HepG2 (cell line): ENCODE measurements at regions of chr2 and their contacts with region 1.

Region 1: GRCh38 chr2:171416009-171416926 is 17.5 kb downstream of the METTL8 start:
- DNase-seq: peak; percentile 87
- ATAC-seq: peak; percentile 100
- H3K4me3 ChIP-seq: no peak overlapping the region
- H3K27ac ChIP-seq: no peak overlapping the region
- H3K4me1 ChIP-seq: peaks cover 9% of the 10 kb centered on the region
- H3K27me3 ChIP-seq: no peaks in the 10 kb centered on the region
- CTCF ChIP-seq: peak; percentile 97
- EP300 ChIP-seq: no peak
- POLR2A ChIP-seq: no peak
- RAD21 ChIP-seq: peak; percentile 95

Region 2: DNA sequence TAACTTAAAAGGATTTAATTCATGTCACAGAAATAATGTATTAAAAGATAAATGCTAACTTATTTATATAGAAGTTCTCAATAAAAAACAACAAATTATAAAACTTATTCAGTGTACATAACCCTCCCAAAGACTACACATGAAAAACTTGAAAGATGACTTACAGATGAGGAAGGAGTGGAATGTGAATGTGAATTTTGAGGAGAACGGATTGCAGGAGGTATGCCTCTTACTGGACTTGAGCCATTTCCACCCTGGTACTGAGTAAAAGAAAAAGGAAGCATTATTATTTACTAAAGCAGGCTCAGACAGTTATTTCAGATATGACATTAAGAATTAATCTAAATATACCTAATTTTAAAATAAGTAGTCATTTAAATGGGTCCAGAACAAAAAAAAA is 360.0 kb before region 1 on chr2:
- CTCF ChIA-PET with region 1: no interaction called
- POLR2A ChIA-PET with region 1: no interaction called
- in situ Hi-C with region 1: no loop called
- intact Hi-C with region 1: loop called (anchors 10 kb)
- DNase-seq: no peak
- ATAC-seq: no peak
- H3K4me3 ChIP-seq: no peak overlapping the region
- H3K27ac ChIP-seq: no peak overlapping the region
- H3K4me1 ChIP-seq: peaks cover 13% of the 10 kb centered on the region
- H3K27me3 ChIP-seq: no peaks in the 10 kb centered on the region
- CTCF ChIP-seq: no peak
- EP300 ChIP-seq: no peak
- POLR2A ChIP-seq: no peak
- RAD21 ChIP-seq: no peak

Region 3: GRCh38 chr2:171086352-171087290 is 329.6 kb before region 1 on chr2:
- CTCF ChIA-PET with region 1: interaction called, 3 read pairs
- POLR2A ChIA-PET with region 1: no interaction called
- in situ Hi-C with region 1: no loop called
- intact Hi-C with region 1: loop called (anchors 10 kb)
- DNase-seq: peak; percentile 65
- ATAC-seq: peak; percentile 79
- H3K4me3 ChIP-seq: peak overlapping the region in 1 of 3 experiments; percentile 3; a peak in 1 of 6 replicates
- H3K27ac ChIP-seq: peak overlapping the region; percentile 0
- H3K4me1 ChIP-seq: peaks cover 61% of the 10 kb centered on the region
- H3K27me3 ChIP-seq: no peaks in the 10 kb centered on the region
- CTCF ChIP-seq: peak; percentile 78
- EP300 ChIP-seq: no peak
- POLR2A ChIP-seq: no peak
- RAD21 ChIP-seq: peak; percentile 43; the same call in 1 of the 2 replicates

Region 4: DNA sequence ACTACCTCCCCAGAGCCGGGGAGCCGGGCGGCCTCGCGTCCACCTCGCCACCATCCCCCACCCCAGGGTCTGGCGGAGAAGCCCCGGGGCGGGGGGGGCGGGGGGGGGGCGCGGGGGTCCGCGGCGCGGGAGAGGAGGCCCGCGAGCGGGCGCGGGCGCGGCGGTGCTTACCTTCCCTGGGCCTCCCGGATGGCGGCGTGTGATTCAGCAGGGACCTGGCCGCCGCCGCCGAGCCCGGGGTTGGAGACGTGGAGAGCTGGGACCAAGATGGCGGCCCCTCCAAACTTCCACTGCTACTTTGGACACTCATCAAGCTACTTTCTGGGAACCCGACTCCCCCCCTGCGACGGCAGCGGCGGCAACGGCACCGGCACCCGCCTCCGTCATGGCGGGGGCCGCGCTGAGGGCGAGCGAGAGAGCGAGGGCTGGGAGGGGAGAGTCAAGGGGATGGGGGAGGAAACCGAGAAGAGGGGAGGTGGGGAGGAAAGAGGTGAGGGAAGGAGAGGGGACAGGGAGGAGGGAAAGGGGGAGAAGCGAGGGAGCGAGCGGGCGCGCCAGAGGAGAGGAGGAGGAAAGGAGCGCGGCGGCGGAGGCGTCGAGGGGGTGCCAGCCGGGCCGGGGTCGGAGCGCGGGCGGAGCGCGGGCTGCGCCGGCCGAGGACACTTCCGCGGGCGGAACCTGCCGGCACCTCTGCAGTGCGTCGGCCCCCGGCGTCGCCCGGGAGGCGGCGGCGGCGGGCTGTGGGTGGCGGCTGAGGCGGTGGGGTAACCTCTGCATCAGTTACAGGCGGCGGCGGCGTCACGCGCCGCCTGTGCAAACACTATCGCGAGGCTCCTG is 255.9 kb before region 1 on chr2 and contains the start of gene TLK1:
- CTCF ChIA-PET with region 1: no interaction called
- POLR2A ChIA-PET with region 1: interaction called, 14 read pairs
- in situ Hi-C with region 1: loop called (anchors 5 kb)
- intact Hi-C with region 1: loop called (anchors 2 kb)
- DNase-seq: peak; percentile 62
- ATAC-seq: peak; percentile 81
- H3K4me3 ChIP-seq: peak within 1 kb of the TSS; percentile 73 to 99 (median 90)
- H3K27ac ChIP-seq: peak within 1 kb of the TSS; percentile 96
- H3K4me1 ChIP-seq: peaks cover 52% of the 10 kb centered on the region
- H3K27me3 ChIP-seq: no peaks in the 10 kb centered on the region; a peak in 1 of 5 replicates
- CTCF ChIP-seq: peak; percentile 15; the same call in 1 of the 2 replicates
- EP300 ChIP-seq: no peak
- POLR2A ChIP-seq: peak; percentile 49 to 72; a peak in 3 of 4 replicates
- RAD21 ChIP-seq: peak; percentile 80
- total RNA-seq, gene TLK1: 28.7 and 52.7 TPM in 2 replicates

Region 5: DNA sequence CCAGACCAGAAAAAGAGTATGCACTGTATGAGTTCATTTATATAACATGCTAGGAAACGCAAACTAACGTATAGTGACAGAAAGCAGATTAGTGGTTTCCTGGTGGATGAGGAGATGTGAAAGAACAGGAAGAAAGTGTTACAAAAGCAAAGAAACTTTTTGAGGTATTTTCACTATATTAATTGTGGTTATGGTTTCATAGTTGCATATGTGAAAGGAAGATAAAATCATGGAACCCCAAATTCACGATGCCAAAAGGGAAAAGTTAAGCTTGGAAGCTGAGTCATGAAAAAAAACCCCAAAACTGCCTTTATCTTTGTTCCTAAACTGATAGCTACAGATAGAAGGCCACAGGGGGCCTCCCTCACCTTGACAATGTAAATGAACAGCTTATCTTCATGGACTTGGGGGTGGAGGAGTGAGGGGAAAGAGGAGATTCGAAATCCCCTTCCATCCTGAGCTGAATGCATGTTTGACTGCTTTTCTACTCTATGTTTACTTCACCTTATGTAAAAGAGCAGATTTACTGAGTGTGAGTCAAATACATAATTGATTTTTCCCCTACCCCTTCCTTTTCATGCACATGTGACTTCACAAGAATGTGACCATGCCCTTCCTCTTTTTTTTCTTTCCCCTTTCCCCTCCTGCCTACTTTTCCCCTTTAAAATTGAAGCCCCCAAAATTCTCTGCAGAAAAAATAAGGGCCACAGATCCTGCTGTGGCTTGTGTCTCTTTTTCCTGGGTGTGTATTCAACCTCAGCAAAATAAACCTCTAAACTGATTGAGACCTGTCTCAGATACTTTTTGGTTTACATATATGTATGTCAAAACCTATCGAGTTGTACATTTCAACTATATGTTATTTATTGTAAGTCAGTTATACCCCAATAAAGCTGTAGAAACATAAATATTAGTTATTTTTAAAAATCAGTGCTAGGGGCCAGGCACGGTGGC is 155.5 kb before region 1 on chr2:
- CTCF ChIA-PET with region 1: no interaction called
- POLR2A ChIA-PET with region 1: no interaction called
- in situ Hi-C with region 1: no loop called
- intact Hi-C with region 1: loop called (anchors 10 kb)
- DNase-seq: peak; percentile 32
- ATAC-seq: peak; percentile 81
- H3K4me3 ChIP-seq: no peak overlapping the region
- H3K27ac ChIP-seq: no peak overlapping the region
- H3K4me1 ChIP-seq: peaks cover 34% of the 10 kb centered on the region
- H3K27me3 ChIP-seq: no peaks in the 10 kb centered on the region
- CTCF ChIP-seq: peak; percentile 55
- EP300 ChIP-seq: no peak
- POLR2A ChIP-seq: no peak
- RAD21 ChIP-seq: 0 out of 2 replicates have a peak, but pooled peaks have one; percentile 18

Region 6: DNA sequence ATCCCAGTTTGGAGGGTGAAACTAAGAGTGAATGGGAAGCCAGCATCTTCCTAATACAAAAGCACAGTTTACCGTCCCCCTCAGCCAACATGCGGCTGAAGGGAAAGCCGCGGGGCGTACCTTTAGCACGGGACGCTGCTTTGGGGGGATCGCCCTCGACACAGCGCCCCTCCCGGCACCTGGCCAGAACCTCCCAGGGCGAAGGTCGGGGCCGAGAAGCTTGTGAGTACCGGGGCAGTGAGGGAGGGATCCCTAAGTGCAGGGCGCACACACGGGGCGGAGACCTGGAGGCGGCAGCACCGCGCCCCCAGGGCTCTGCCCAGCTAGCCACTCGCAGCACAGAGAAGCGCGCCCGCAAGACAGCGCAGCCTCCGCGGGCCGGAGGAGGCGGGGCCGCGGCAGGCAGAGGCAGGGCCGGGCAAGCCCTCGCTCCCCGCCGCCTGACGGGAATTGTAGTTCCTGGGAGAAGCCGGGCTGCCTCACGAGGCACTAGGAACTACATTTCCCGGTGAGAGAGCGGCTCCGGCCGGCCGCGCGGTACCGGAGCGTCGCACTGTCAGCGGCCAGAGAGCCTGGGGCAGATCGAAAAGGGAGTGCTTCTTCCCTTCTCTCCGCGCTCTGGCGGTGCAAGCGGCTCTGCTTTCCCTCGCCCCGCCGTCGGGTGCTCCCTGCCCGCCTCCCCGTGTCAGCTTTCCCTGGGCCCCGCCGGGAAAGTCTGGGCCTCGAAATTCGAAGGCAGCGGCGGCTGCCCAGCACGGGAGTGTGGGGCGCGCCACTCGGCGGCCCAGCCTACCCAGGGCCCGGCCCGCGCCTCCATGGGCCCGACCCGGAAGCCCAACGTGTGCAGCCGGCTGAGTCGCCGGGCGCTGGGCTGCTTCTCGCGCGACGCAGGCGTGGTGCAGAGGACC is 17.7 kb after region 1 on chr2 and contains the starts of genes DCAF17 and METTL8:
- CTCF ChIA-PET with region 1: no interaction called
- POLR2A ChIA-PET with region 1: interaction called, 21 read pairs
- in situ Hi-C with region 1: no loop called
- intact Hi-C with region 1: no loop called
- DNase-seq: peak; percentile 97
- ATAC-seq: peak; percentile 97
- H3K4me3 ChIP-seq: peak within 1 kb of the TSS; percentile 78 to 90 (median 88)
- H3K27ac ChIP-seq: peak within 1 kb of the TSS; percentile 87
- H3K4me1 ChIP-seq: peaks cover 75% of the 10 kb centered on the region
- H3K27me3 ChIP-seq: no peaks in the 10 kb centered on the region; a peak in 1 of 5 replicates
- CTCF ChIP-seq: peak; percentile 96
- EP300 ChIP-seq: peak; percentile 17 to 63; a peak in 2 of 4 replicates
- POLR2A ChIP-seq: peak; percentile 81 to 82
- RAD21 ChIP-seq: peak; percentile 62
- total RNA-seq, gene DCAF17: 30.0 and 35.3 TPM in 2 replicates
- total RNA-seq, gene METTL8: 68.2 and 89.8 TPM in 2 replicates

Region 7: DNA sequence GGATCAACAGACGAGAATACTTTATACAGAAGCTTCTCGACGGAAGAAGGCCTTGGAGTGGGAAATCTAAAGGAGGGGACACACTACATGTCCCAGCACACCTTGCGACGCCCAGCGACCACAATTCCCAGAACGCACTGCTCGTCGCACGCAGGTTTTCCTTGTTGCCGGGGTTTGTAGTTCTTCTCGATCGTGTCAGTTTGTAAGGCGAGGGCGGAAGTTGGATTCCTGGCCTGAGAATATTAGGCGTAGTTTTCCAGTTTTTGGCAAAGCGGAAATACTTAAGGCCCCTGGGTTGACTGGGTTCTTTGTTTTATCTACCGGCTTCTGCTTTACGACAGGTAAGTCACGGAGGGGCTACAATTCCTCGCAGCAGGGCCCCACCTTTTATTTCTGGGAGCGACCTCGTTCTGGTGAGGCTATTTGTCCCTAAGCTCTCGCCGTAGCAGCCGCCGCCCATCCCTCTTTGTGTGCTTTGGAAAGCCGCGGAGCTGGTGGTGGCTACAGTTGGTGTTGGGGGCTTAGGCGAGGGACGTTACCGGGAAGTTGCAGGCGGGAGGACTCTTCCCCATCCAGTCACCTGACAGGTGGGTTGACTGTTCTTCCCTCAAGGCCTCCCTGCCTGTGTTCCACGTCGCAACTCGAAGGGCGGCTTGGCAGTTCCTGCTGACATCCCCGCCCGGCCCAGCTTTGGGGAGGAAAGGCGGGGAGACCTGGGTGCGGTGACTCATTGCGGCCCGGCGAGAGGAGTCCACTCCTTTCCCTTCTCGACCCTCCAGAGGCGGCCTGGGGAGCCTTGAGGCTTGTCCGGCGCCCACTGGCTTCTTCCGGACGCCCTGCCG is 271.2 kb after region 1 on chr2 and contains the start of gene DYNC1I2:
- CTCF ChIA-PET with region 1: no interaction called
- POLR2A ChIA-PET with region 1: no interaction called
- in situ Hi-C with region 1: no loop called
- intact Hi-C with region 1: no loop called
- DNase-seq: peak; percentile 95
- ATAC-seq: peak; percentile 99
- H3K4me3 ChIP-seq: peak within 1 kb of the TSS; percentile 86 to 99 (median 95)
- H3K27ac ChIP-seq: peak within 1 kb of the TSS; percentile 70
- H3K4me1 ChIP-seq: peaks cover 12% of the 10 kb centered on the region
- H3K27me3 ChIP-seq: peaks cover 0 to 10% of the 10 kb centered on the region in 2 experiments; a peak in 1 of 5 replicates
- CTCF ChIP-seq: peak; percentile 18; the same call in 1 of the 2 replicates
- EP300 ChIP-seq: peak in 1 of 2 experiments; percentile 13; a peak in 1 of 4 replicates
- POLR2A ChIP-seq: peak; percentile 72 to 82
- RAD21 ChIP-seq: no peak; the same call in 1 of the 2 replicates
- total RNA-seq, gene DYNC1I2: 84.0 and 125 TPM in 2 replicates